ENCODE measurements at regions of chr11 and their contacts with region 1.

Region 1: GRCh38 chr11:46529095-46529905 is 64.5 kb downstream of the AMBRA1 start:
- DNase-seq: peak; percentile 60 to 92
- H3K4me3 ChIP-seq: no peak overlapping the region
- H3K27ac ChIP-seq: no peak overlapping the region
- H3K4me1 ChIP-seq: peaks cover 0 to 6% (median 1%) of the 10 kb centered on the region in 4 experiments; a peak in 3 of 7 replicates
- H3K27me3 ChIP-seq: no peaks in the 10 kb centered on the region
- CTCF ChIP-seq: peak; percentile 89 to 98 (median 97)
- EP300 ChIP-seq: no peak
- POLR2A ChIP-seq: no peak
- RAD21 ChIP-seq: peak; percentile 67 to 73

Region 2: DNA sequence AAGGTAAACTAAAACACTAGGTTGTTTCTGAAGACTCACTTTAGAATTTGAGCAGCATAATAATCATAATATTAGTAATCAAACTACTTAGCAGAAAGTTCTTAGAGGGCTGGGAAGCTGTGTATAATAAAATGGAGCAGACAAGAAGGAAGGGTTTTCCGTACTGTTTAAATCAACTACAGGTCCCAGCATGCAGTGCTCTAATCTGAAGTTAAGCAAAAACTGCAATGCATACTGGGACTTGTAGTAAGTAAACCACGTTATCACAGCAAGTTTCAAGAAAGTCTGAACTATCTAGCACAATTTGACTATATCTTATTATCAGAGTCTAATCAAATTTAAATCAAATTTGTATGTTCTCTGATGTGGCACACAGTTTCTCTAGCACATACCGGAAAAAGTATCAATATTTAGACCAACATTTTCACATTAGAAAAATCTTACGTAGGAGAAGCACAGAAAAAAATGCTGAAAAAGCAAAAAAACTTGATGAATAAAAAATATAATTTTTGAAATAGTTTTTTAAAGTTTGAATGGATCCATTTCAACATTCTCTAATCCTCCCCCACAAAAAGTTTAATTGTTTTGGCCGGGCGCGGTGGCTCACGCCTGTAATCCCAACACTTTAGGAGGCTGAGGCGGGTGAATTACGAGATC is 416.2 kb before region 1 on chr11:
- CTCF ChIA-PET with region 1: no interaction called
- POLR2A ChIA-PET with region 1: no interaction called
- DNase-seq: no peak
- H3K4me3 ChIP-seq: no peak overlapping the region
- H3K27ac ChIP-seq: no peak overlapping the region
- H3K4me1 ChIP-seq: peaks cover 0 to 5% (median 1%) of the 10 kb centered on the region in 4 experiments; a peak in 2 of 7 replicates
- H3K27me3 ChIP-seq: no peaks in the 10 kb centered on the region
- CTCF ChIP-seq: no peak
- EP300 ChIP-seq: no peak
- POLR2A ChIP-seq: no peak
- RAD21 ChIP-seq: no peak

Region 3: GRCh38 chr11:46410021-46410420 is 119.3 kb before region 1 on chr11:
- CTCF ChIA-PET with region 1: interaction called, 26 read pairs
- POLR2A ChIA-PET with region 1: no interaction called
- DNase-seq: peak in 1 of 2 experiments; percentile 55
- H3K4me3 ChIP-seq: no peak overlapping the region
- H3K27ac ChIP-seq: no peak overlapping the region
- H3K4me1 ChIP-seq: peaks cover 0 to 2% (median 0%) of the 10 kb centered on the region in 4 experiments; a peak in 1 of 7 replicates
- H3K27me3 ChIP-seq: no peaks in the 10 kb centered on the region
- CTCF ChIP-seq: peak; percentile 62 to 81 (median 72)
- EP300 ChIP-seq: no peak
- POLR2A ChIP-seq: no peak
- RAD21 ChIP-seq: peak; percentile 72 to 76

Region 4: GRCh38 chr11:46504817-46505613 is 24.3 kb before region 1 on chr11:
- CTCF ChIA-PET with region 1: interaction called, 12 read pairs
- POLR2A ChIA-PET with region 1: no interaction called
- DNase-seq: no peak
- H3K4me3 ChIP-seq: no peak overlapping the region
- H3K27ac ChIP-seq: no peak overlapping the region
- H3K4me1 ChIP-seq: peaks cover 2 to 10% (median 5%) of the 10 kb centered on the region in 4 experiments; a peak in 5 of 7 replicates
- H3K27me3 ChIP-seq: no peaks in the 10 kb centered on the region
- CTCF ChIP-seq: no peak
- EP300 ChIP-seq: no peak
- POLR2A ChIP-seq: no peak
- RAD21 ChIP-seq: no peak

Region 5: GRCh38 chr11:46513934-46514342 is 15.4 kb before region 1 on chr11:
- CTCF ChIA-PET with region 1: interaction called, 19 read pairs
- POLR2A ChIA-PET with region 1: no interaction called
- DNase-seq: no peak
- H3K4me3 ChIP-seq: no peak overlapping the region
- H3K27ac ChIP-seq: no peak overlapping the region
- H3K4me1 ChIP-seq: peaks cover 4 to 10% (median 6%) of the 10 kb centered on the region in 4 experiments; a peak in 3 of 7 replicates
- H3K27me3 ChIP-seq: no peaks in the 10 kb centered on the region
- CTCF ChIP-seq: no peak
- EP300 ChIP-seq: no peak
- POLR2A ChIP-seq: no peak
- RAD21 ChIP-seq: no peak

Region 6: DNA sequence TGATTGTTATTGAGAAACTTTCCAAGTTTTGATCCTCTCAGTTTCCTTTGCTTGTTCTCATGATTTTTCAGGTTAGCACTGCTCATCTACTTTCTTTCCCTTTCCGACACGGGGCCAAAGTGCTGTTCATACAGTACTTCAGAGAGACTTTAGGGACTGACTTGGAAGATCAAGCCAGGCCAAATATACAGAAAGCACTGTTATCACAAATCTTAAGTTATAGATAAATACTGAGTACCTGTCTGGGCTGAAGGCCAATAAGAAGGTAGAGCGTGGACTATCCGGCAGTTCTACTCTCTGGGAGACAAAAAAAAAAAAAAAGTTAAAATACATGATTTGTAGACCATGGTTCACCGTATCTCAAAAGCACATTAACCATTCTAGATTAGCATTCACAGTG is 18.3 kb after region 1 on chr11:
- CTCF ChIA-PET with region 1: interaction called, 16 read pairs
- POLR2A ChIA-PET with region 1: no interaction called
- DNase-seq: no peak
- H3K4me3 ChIP-seq: no peak overlapping the region
- H3K27ac ChIP-seq: no peak overlapping the region
- H3K4me1 ChIP-seq: no peaks in the 10 kb centered on the region
- H3K27me3 ChIP-seq: no peaks in the 10 kb centered on the region
- CTCF ChIP-seq: no peak
- EP300 ChIP-seq: no peak
- POLR2A ChIP-seq: no peak
- RAD21 ChIP-seq: no peak